PC-9 (cell line): ENCODE measurements at regions of chr6 and their contacts with region 1.

Region 1: GRCh38 chr6:42118162-42119001 is 24.0 kb downstream of the C6orf132 start:
- DNase-seq: peak; percentile 95 to 99
- H3K4me3 ChIP-seq: no peak overlapping the region
- H3K27ac ChIP-seq: peak overlapping the region; percentile 94
- H3K4me1 ChIP-seq: peaks cover 88% of the 10 kb centered on the region
- H3K27me3 ChIP-seq: no peaks in the 10 kb centered on the region
- CTCF ChIP-seq: no peak

Region 2: DNA sequence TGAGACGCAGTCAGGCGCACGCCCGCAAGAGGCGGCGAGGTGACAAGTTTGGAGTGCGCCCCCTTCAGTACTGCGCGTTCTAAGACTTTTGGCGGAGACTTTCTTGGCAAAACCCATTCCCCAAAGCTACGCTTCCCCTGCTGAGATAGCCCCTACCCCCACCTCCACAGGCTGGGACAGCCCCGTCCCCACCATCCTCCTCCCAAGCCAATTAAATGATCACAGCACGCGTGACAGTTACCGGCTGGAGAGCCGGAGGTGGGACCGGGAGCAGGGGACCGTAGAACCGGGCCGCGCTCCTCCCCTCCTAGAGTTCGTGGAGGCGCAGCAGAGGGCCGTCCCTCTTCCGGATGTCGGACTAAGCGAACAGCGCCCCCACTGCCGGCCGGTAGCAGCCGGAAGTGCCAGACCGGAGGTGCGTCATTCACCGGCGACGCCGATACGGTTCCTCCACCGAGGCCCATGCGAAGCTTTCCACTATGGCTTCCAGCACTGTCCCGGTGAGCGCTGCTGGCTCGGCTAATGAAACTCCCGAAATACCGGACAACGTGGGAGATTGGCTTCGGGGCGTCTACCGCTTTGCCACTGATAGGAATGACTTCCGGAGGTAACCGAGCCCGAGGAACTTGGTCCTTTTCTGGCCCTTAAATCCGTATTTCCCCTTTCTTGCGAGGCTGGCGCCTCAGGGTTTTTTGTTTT is 331.0 kb before region 1 on chr6 and contains the start of gene TOMM6:
- CTCF ChIA-PET with region 1: no interaction called
- POLR2A ChIA-PET with region 1: no interaction called
- intact Hi-C with region 1: no loop called
- DNase-seq: peak; percentile 83 to 92
- H3K4me3 ChIP-seq: peak within 1 kb of the TSS; percentile 100
- H3K27ac ChIP-seq: peak within 1 kb of the TSS; percentile 91
- H3K4me1 ChIP-seq: peaks cover 42% of the 10 kb centered on the region
- H3K27me3 ChIP-seq: no peaks in the 10 kb centered on the region
- CTCF ChIP-seq: peak; percentile 88
- total RNA-seq, gene TOMM6: 143 and 170 TPM in 2 replicates

Region 3: DNA sequence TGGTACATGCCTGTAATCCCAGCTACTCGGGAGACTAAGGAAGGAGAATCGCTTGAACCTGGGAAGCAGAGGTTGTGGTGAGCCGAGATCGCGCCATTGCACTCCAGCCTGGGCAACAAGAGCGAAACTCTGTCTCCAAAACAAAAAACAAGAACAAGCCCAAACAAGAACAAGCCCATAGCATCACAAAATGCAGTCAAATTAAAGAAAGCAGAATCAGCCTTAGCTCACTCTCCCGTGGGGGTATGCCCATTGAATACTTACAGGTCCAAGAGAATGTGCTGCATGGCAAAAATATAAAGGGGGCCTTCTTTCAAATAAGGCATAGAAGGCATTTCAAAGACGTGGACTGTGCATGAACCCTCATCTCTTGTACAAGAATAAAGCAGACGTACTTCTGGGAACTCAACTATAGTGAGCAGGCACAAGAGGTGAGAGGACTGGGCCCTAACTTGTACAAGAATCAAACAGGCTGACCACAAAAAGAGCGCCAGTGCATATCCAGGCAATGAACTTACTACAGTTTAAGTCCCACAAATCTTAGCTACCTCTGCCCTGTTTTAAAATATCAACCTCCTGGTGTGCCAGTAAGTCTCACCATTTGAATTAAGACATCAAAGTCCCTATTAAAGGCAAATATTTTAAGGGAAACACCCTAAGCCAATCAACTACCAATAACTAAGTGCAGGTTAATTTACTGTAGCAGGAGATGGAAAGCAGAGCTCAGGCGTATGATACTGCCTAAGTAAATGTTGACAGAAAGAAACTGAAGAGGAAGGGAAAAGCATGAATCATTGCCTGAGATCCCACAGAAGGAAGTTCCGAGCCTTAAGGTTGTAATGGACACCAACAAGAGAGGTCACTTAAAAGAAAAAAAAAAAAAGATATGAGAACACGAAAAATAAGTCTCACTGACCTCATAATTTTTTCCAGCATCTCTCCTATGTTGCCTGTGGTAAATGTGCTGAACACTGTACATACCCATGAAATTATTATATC is 293.5 kb before region 1 on chr6:
- CTCF ChIA-PET with region 1: interaction called, 17 read pairs
- POLR2A ChIA-PET with region 1: no interaction called
- intact Hi-C with region 1: no loop called
- DNase-seq: peak; percentile 11 to 88
- H3K4me3 ChIP-seq: no peak overlapping the region
- H3K27ac ChIP-seq: peak overlapping the region; percentile 68
- H3K4me1 ChIP-seq: peaks cover 16% of the 10 kb centered on the region
- H3K27me3 ChIP-seq: no peaks in the 10 kb centered on the region
- CTCF ChIP-seq: no peak

Region 4: DNA sequence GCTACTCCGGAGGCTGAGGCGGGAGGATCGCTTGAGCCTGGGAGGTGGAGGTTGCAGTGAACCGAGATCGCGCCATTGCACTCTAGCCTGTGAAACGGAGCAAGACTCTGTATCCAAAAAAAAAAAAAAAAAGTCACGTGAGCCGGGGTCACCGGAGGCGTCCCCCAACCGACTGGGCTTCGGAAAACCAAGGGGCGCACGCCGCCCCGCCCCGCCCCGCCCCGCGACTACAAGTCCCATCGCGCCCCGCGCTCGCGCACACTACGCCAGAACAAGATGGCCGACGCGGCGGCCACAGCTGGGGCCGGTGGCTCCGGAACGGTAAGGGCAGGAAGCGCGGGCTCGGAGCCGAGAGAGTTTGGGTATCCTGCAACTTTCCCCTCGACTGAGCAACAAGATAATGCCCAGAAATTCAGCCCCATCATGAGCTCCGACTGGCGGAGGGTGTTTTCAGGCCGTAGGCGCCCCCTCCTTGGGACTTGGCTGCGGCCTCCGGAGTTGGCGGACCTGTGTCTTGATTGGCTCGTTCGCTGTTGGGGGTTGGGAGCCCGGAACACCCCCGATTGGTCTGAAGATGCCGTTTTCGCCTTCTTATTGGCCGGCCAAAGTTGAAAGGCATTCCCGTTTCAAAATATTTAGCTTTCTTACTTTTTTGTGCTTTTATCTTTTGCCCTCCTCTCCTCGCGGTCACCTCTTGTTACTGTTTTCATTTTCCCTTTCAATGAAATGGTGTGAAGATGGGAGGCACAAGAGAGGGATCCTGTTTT is 67.9 kb before region 1 on chr6 and contains the start of gene TAF8:
- CTCF ChIA-PET with region 1: no interaction called
- POLR2A ChIA-PET with region 1: interaction called, 12 read pairs
- intact Hi-C with region 1: no loop called
- DNase-seq: peak; percentile 83 to 90
- H3K4me3 ChIP-seq: peak within 1 kb of the TSS; percentile 91
- H3K27ac ChIP-seq: peak within 1 kb of the TSS; percentile 68
- H3K4me1 ChIP-seq: peaks cover 36% of the 10 kb centered on the region
- H3K27me3 ChIP-seq: no peaks in the 10 kb centered on the region
- CTCF ChIP-seq: no peak
- total RNA-seq, gene TAF8: 35.6 and 38.4 TPM in 2 replicates

Region 5: GRCh38 chr6:42104095-42104806 is 14.1 kb before region 1 on chr6:
- CTCF ChIA-PET with region 1: interaction called, 21 read pairs
- POLR2A ChIA-PET with region 1: interaction called, 50 read pairs
- intact Hi-C with region 1: loop called (anchors 1 kb)
- DNase-seq: no peak
- H3K4me3 ChIP-seq: no peak overlapping the region
- H3K27ac ChIP-seq: no peak overlapping the region
- H3K4me1 ChIP-seq: peaks cover 29% of the 10 kb centered on the region
- H3K27me3 ChIP-seq: no peaks in the 10 kb centered on the region
- CTCF ChIP-seq: no peak

Region 6: GRCh38 chr6:42148058-42148457 is 29.7 kb after region 1 on chr6:
- CTCF ChIA-PET with region 1: interaction called, 5 read pairs
- POLR2A ChIA-PET with region 1: interaction called, 38 read pairs
- intact Hi-C with region 1: no loop called
- DNase-seq: peak; percentile 51 to 55
- H3K4me3 ChIP-seq: no peak overlapping the region
- H3K27ac ChIP-seq: no peak overlapping the region
- H3K4me1 ChIP-seq: peaks cover 13% of the 10 kb centered on the region
- H3K27me3 ChIP-seq: no peaks in the 10 kb centered on the region
- CTCF ChIP-seq: no peak

Region 7: DNA sequence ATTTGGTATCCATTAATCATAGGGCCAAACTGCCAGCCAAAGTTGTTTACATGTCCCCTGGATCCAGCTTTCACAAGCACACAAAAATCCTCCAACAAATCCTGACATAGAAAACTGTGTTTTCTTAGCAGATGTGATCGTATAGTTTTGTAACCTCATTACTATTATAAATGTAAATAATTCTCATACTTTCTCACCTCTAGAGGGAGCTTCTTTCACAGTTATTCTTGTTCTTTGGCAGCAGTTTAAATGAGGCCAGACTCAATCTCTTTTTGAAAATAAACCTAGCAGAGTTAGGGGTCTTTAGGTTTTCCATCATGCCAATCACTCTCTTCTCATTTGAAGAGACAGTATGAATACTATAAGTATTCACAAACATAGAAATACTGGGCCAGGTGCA is 1268.1 kb after region 1 on chr6:
- CTCF ChIA-PET with region 1: interaction called, 17 read pairs
- POLR2A ChIA-PET with region 1: no interaction called
- intact Hi-C with region 1: no loop called
- DNase-seq: no peak
- H3K4me3 ChIP-seq: no peak overlapping the region
- H3K27ac ChIP-seq: no peak overlapping the region
- H3K4me1 ChIP-seq: no peaks in the 10 kb centered on the region
- H3K27me3 ChIP-seq: no peaks in the 10 kb centered on the region
- CTCF ChIP-seq: peak; percentile 72